Posterior cingulate gyrus (tissue), 11 donors: ENCODE measurements at regions of chr20 and their contacts with region 1.

Region 1: GRCh38 chr20:56247948-56248782 is at the start of gene MC3R:
- DNase-seq: peak; percentile 35 to 94 (median 58)

Region 2: DNA sequence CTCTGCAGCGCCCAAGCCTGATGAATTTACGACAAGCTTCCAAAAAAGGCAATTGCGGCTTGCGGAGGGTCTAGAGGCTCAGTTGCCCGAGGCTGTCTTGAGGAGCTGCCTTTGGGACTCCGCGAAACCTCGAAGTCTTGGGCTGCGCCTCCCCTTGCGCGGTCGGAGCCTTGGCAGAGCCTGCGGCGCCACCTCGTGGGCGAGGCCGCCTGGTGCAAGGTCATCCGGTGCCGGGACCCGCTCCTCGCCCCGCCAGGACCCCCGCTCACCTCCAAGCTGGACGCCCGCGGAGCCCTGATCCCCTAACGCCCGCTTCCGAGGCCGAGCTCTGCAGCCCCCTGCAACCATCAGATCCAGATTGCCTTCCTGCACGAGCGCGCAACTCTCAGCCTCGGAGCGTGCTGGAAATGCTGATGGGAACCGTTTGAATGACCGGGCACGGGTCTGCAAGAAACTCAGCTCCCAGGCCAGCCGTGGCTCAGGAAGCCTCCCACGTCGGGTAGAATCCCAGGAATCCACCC is 95.8 kb after region 1 on chr20:
- intact Hi-C with region 1: loop called (anchors 1 kb)
- DNase-seq: peak in 9 of 10 donors; percentile 55 to 93 (median 61)